Dendritic cell treated with granulocyte-macrophage colony-stimulating factor and Interleukin-4, amounts not matched to agents 40 ng/mL and 50 ng/mL, for 4 days (primary cell): ENCODE measurements at regions of chr1 and their contacts with region 1.

Region 1: DNA sequence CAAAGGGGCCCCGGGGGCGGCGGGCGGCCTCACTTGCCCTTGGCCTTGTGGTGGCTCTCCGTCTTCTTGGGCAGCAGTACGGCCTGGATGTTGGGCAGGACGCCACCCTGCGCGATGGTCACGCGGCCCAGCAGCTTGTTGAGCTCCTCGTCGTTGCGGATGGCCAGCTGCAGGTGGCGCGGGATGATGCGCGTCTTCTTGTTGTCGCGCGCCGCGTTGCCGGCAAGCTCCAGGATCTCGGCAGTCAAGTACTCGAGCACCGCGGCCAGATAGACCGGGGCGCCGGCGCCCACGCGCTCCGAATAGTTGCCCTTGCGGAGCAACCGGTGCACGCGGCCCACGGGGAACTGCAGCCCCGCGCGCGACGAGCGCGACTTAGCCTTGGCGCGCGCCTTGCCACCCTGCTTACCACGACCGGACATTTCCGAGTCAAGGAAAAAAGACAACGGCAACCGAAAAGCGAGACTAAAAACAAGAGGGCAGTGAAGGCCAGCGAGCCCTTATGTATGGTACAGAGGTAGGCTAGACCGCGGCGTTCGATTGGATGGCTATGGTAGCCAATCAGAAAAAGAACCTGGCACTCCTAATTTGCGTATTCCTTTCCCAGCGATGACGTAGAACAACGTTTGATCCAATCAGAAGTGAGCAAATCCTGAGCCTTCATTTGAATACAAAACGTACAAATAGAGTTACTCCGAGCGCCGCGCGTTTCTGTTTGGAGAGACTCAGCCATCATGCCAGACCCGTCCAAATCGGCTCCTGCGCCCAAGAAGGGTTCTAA is 29.6 kb upstream of the RNF187 start:
- H3K4me3 Mint-ChIP-seq: peak overlapping the region; percentile 84
- H3K27ac Mint-ChIP-seq: peak overlapping the region; percentile 93
- H3K4me1 Mint-ChIP-seq: peaks cover 31% of the 10 kb centered on the region
- H3K27me3 Mint-ChIP-seq: peaks cover 42% of the 10 kb centered on the region

Region 2: GRCh38 chr1:228405987-228406265 is 51.7 kb before region 1 on chr1:
- intact Hi-C with region 1: loop called (anchors 2 kb)
- H3K4me3 Mint-ChIP-seq: peak overlapping the region; percentile 96
- H3K27ac Mint-ChIP-seq: peak overlapping the region; percentile 92
- H3K4me1 Mint-ChIP-seq: peaks cover 70% of the 10 kb centered on the region
- H3K27me3 Mint-ChIP-seq: no peaks in the 10 kb centered on the region